Right ventricle myocardium superior (tissue), 1 donor: ENCODE measurements at regions of chr13 and their contacts with region 1.

Region 1: GRCh38 chr13:94435604-94436226 is 43.8 kb downstream of the DCT start:
- DNase-seq: no peak
- ATAC-seq: peak; percentile 39

Region 2: DNA sequence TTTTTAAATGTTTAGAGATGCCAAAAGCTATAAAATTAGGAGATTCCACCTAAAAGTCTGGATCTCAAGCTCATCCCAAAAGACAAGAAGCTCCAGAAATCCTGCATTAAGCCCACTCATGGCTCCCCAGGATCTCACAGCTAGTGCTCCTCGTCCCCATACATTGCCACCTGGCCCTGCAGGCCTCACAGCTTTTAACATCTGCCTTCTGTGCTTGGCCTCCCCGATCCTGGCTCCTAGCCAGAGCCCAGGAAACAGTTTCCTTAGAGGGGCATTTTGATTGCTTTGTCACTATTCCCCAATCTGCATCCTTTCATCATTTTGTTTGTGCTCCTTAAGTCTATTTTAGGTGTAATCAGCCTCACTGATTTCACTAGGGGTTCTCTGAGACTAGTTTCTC is 58.3 kb after region 1 on chr13:
- intact Hi-C with region 1: no loop called
- DNase-seq: no peak
- ATAC-seq: no peak

Region 3: DNA sequence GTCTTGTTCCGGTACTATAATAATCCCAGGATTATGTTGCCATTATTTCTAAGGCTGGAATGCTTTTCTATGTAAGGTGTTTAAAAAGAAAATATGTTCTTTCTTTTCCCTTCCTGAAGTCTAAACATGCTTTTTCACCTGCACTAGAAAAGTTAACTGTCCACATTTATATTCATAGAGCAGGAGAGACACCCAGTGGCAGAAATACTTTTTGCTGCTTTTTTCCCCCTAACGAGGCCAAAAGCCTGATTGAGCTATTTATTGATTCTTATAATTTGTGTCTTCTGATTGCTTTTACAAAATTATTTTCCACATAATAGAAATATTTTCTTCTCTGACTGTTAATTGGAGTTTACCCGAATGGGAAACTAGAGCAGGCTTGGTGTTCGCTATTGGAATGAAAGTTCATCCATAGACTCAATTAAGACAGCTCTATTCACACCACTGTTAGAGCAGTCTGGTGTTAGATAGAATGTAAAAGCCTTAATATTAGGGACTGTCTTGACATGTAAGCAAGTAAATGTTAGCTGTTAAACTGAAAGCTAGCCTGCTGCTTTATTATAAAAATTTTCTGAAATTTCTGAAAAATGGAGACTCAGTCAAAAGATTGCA is 181.8 kb after region 1 on chr13:
- intact Hi-C with region 1: loop called (anchors 2 kb)
- DNase-seq: no peak
- ATAC-seq: peak; percentile 77

Region 4: DNA sequence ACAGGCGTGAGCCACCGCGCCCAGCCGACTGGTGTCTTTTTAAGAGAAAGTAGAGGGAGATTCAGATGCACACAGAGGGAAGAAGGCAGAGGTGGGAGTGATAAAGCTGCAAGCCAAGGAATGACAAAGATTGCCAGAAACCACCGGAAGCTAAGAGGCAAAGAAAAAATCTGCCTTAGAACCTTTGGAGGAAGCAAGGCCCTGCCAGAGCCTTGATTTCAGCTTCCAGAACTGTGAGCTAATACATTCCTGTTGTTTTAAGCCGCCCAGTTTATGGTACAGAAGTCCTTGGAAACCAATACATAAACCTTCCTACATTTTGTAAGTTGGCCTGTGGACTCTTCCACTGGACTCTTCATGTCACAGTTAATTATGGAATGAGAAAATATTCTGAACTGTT is 348.4 kb after region 1 on chr13:
- intact Hi-C with region 1: no loop called
- DNase-seq: no peak
- ATAC-seq: no peak